Activated CD8-positive, alpha-beta memory T cell treated with anti-CD3 and anti-CD28 coated beads, Interleukin-2, amount 10 ng/mL, durations not matched to agents 7 days and 5 days (primary cell): ENCODE measurements at regions of chr1 and their contacts with region 1.

Region 1: GRCh38 chr1:206935491-206936067 is 10.7 kb downstream of the PIGR start:
- DNase-seq: peak; percentile 64
- ATAC-seq: peak; percentile 74
- H3K4me3 Mint-ChIP-seq: no peak overlapping the region
- H3K27ac Mint-ChIP-seq: no peak overlapping the region
- H3K4me1 Mint-ChIP-seq: peaks cover 13% of the 10 kb centered on the region
- H3K27me3 Mint-ChIP-seq: no peaks in the 10 kb centered on the region

Region 2: DNA sequence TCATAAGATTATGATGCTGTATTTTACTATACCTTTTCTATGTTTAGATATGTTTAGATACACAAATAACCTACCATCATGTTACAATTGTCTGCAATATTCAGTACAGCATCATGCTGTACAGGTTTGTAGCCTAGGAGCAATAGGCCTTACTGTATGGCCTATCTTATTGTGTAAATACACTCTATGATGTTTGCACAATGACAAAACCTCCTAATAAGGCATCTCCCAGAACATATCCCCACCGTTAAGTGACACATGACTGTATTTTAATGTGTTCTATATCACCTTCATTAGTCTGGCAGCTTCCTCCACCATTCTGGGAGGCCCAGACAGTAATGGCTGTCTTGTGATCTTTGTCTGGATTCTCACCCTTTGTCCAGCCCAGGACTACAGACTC is 139.0 kb before region 1 on chr1:
- CTCF ChIA-PET with region 1: no interaction called
- DNase-seq: no peak
- ATAC-seq: no peak
- H3K4me3 Mint-ChIP-seq: no peak overlapping the region
- H3K27ac Mint-ChIP-seq: no peak overlapping the region
- H3K4me1 Mint-ChIP-seq: peaks cover 60% of the 10 kb centered on the region
- H3K27me3 Mint-ChIP-seq: peaks cover 36% of the 10 kb centered on the region

Region 3: DNA sequence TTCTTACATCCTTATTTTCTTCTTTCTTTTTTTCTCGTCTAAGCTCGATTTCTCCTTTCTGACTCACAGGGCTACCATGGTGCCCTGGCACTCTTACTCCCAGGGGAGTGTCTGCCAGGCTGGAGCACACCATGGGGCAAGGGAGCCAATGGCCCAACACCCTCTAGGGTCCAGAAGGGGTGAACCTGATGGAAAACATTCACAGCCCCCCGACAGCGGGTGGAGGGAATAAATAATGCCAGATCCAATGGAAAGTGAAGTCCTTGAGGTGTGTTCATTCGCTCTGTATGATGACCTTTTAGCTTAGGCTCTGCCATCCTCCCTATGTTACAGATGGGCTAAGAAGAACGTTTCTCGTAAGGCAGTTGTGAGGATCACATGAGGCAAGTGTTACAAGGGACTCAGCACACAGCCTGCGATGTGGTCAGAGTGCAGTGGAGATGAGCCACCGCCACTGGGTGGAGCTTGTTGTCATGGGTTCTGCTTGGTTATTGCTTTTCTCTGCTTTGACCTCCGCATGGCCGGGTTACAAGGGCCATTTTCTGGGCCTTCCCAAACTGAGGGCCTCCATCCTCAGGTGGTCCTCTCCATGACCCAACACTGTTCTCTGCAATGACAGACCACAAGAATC is 10.4 kb before region 1 on chr1:
- CTCF ChIA-PET with region 1: interaction called, 28 read pairs
- DNase-seq: peak; percentile 90
- ATAC-seq: peak; percentile 74
- H3K4me3 Mint-ChIP-seq: no peak overlapping the region
- H3K27ac Mint-ChIP-seq: no peak overlapping the region
- H3K4me1 Mint-ChIP-seq: peaks cover 8% of the 10 kb centered on the region
- H3K27me3 Mint-ChIP-seq: no peaks in the 10 kb centered on the region

Region 4: DNA sequence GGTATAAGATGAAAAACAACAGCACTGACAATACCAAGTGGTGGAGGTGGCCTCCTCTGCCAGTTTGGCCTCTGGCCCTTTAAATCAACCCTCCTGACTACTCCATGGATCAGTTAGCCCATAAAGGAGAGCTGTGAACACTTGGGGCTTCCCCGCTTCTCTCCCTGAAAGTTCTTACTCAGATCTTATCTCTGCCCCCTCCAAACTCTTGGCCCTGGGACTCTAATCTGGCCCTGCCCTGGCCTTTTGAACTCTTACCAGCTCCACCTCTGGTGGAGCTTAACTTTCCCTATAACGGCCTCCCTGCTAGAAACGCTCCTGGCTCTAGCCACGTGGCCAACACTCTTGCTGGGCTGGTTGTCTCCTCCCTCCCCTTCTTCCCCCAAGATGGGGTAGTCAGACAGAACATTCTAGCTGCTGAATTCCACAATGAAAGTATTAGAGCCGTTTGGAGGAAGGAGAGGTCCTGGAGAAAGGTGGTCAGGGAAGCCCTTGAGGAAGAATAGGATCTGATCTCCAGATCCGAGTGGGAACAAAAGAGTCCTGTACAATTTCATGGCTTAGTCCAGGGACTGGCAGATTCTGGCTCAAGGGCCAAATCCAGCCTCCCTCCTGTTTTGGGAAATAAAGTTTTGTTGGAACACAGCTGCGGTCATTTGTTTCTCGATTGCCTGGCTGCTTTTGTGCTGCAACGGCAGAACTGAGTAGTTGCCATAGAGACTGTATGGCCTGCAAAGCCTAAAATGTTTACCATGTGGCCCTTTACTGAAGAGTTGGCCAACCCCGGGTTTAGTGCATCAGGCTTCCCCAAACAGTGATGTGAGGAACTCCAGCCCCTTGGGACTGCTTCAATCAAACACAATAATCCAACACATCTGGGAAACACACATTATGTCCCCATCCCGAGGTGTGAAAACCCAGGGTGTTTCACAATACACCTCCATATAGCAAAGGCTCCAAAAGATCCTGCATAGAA is 20.2 kb after region 1 on chr1:
- CTCF ChIA-PET with region 1: interaction called, 20 read pairs
- DNase-seq: no peak
- ATAC-seq: no peak
- H3K4me3 Mint-ChIP-seq: no peak overlapping the region
- H3K27ac Mint-ChIP-seq: no peak overlapping the region
- H3K4me1 Mint-ChIP-seq: peaks cover 12% of the 10 kb centered on the region
- H3K27me3 Mint-ChIP-seq: peaks cover 7% of the 10 kb centered on the region

Region 5: DNA sequence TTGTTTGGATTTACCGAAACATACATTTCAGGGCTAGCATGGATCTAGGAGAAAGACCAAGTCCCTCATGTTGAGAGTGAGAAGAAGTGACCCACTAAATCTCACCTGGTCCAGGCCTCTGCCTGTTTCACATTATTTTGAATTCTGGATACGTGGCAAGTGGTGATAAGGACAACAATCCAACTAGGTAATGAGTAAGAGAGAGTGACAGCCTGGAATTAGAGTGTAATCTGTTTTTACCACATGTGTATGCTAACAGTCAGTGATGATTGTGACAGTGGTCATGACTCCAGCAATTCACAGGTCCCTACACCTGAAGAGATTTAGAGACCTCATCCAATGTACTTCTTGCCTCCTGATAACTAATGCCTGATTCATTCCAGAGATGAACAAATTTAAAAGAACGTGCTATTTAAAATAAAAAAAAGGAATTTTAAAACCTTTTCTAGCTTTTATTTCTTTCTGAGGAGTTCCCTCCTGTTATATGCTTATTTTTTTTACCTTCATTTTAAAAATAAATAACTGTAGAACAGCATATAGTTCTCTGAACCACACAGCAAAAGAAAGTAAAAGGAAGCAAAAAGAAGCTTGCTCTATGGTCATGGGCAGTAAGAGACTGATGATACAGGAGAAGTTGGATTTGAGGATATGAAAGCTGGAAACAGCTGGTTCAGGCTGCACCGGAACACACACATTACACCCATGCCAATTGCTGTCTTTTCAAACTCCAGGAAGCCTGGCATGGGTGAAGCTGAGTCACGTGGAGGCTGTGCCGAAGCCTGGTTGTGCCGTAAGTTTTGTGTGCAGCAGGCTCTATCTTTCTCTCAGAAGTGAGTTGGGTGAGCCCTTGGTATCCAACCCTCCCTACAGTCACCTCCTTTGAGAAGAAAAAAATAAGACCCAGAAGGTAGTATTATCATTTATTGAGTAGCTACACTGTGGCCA is 82.3 kb after region 1 on chr1:
- CTCF ChIA-PET with region 1: no interaction called
- DNase-seq: no peak
- ATAC-seq: no peak
- H3K4me3 Mint-ChIP-seq: no peak overlapping the region
- H3K27ac Mint-ChIP-seq: no peak overlapping the region
- H3K4me1 Mint-ChIP-seq: peaks cover 5% of the 10 kb centered on the region
- H3K27me3 Mint-ChIP-seq: peaks cover 23% of the 10 kb centered on the region